Natural killer cell (primary cell): ENCODE measurements at regions of chr14 and their contacts with region 1.

Region 1: GRCh38 chr14:69818757-69819191 is 21.7 kb upstream of the SLC10A1 start:
- DNase-seq: peak; percentile 26 to 81
- ATAC-seq: peak; percentile 78 to 82 (median 80)
- H3K4me3 ChIP-seq: no peak overlapping the region
- H3K4me3 Mint-ChIP-seq: no peak overlapping the region
- H3K27ac ChIP-seq: no peak overlapping the region
- H3K27ac Mint-ChIP-seq: no peak overlapping the region
- H3K4me1 ChIP-seq: no peaks in the 10 kb centered on the region
- H3K4me1 Mint-ChIP-seq: peaks cover 0 to 5% of the 10 kb centered on the region in 2 donors
- H3K27me3 ChIP-seq: no peaks in the 10 kb centered on the region
- H3K27me3 Mint-ChIP-seq: peaks cover 0 to 2% of the 10 kb centered on the region in 2 donors
- CTCF ChIP-seq: peak; percentile 82

Region 2: GRCh38 chr14:69002069-69002468 is 816.7 kb before region 1 on chr14:
- intact Hi-C with region 1: no loop called
- DNase-seq: peak in 1 of 2 donors; percentile 46
- ATAC-seq: peak in 1 of 3 donors; percentile 54
- H3K4me3 ChIP-seq: no peak overlapping the region
- H3K4me3 Mint-ChIP-seq: no peak overlapping the region
- H3K27ac ChIP-seq: no peak overlapping the region
- H3K27ac Mint-ChIP-seq: no peak overlapping the region
- H3K4me1 ChIP-seq: no peaks in the 10 kb centered on the region
- H3K4me1 Mint-ChIP-seq: no peaks in the 10 kb centered on the region
- H3K27me3 ChIP-seq: no peaks in the 10 kb centered on the region
- H3K27me3 Mint-ChIP-seq: peaks cover 10 to 17% of the 10 kb centered on the region in 2 donors
- CTCF ChIP-seq: no peak

Region 3: GRCh38 chr14:69695322-69696203 is 123.2 kb before region 1 on chr14:
- intact Hi-C with region 1: no loop called
- DNase-seq: no peak
- ATAC-seq: no peak
- H3K4me3 ChIP-seq: no peak overlapping the region
- H3K4me3 Mint-ChIP-seq: peak overlapping the region; percentile 47
- H3K27ac ChIP-seq: peak overlapping the region; percentile 63
- H3K27ac Mint-ChIP-seq: peak overlapping the region; percentile 80 to 81
- H3K4me1 ChIP-seq: peaks cover 52% of the 10 kb centered on the region
- H3K4me1 Mint-ChIP-seq: peaks cover 86 to 92% of the 10 kb centered on the region in 2 donors
- H3K27me3 ChIP-seq: no peaks in the 10 kb centered on the region
- H3K27me3 Mint-ChIP-seq: no peaks in the 10 kb centered on the region
- CTCF ChIP-seq: no peak

Region 4: GRCh38 chr14:70013269-70013873 is 194.6 kb after region 1 on chr14:
- intact Hi-C with region 1: loop called (anchors 5 kb)
- DNase-seq: peak in 1 of 2 donors; percentile 24
- ATAC-seq: peak in 1 of 3 donors; percentile 50
- H3K4me3 ChIP-seq: no peak overlapping the region
- H3K4me3 Mint-ChIP-seq: no peak overlapping the region
- H3K27ac ChIP-seq: no peak overlapping the region
- H3K27ac Mint-ChIP-seq: no peak overlapping the region
- H3K4me1 ChIP-seq: peaks cover 2% of the 10 kb centered on the region
- H3K4me1 Mint-ChIP-seq: peaks cover 9 to 11% of the 10 kb centered on the region in 2 donors
- H3K27me3 ChIP-seq: no peaks in the 10 kb centered on the region
- H3K27me3 Mint-ChIP-seq: peaks cover 0 to 16% of the 10 kb centered on the region in 2 donors
- CTCF ChIP-seq: peak; percentile 22

Region 5: GRCh38 chr14:70027785-70028428 is 209.1 kb after region 1 on chr14:
- intact Hi-C with region 1: loop called (anchors 1 kb)
- DNase-seq: peak; percentile 63 to 64
- ATAC-seq: peak; percentile 55 to 89 (median 63)
- H3K4me3 ChIP-seq: no peak overlapping the region
- H3K4me3 Mint-ChIP-seq: no peak overlapping the region
- H3K27ac ChIP-seq: no peak overlapping the region
- H3K27ac Mint-ChIP-seq: no peak overlapping the region
- H3K4me1 ChIP-seq: no peaks in the 10 kb centered on the region
- H3K4me1 Mint-ChIP-seq: no peaks in the 10 kb centered on the region
- H3K27me3 ChIP-seq: no peaks in the 10 kb centered on the region
- H3K27me3 Mint-ChIP-seq: peaks cover 0 to 5% of the 10 kb centered on the region in 2 donors
- CTCF ChIP-seq: peak; percentile 71

Region 6: DNA sequence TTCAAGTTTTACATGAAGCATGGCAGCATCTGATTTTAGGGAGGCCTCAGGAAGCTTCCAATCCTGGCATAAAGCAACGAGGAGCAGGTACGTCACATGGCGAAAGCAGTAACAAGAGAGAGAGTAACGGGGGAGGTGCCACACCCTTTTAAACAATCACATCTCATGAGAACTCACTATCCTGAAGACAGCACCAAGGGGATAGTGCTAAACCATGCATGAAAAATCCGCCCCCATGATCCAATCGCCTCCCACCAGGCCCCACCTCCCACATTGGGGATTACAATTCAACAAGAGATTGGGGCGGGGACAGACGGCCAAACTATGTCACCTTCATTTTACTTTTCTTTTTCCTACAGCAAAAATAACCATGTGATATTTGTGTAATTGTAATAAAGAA is 997.8 kb after region 1 on chr14:
- intact Hi-C with region 1: loop called (anchors 5 kb)
- DNase-seq: no peak
- ATAC-seq: no peak
- H3K4me3 ChIP-seq: no peak overlapping the region
- H3K4me3 Mint-ChIP-seq: no peak overlapping the region
- H3K27ac ChIP-seq: no peak overlapping the region
- H3K27ac Mint-ChIP-seq: no peak overlapping the region
- H3K4me1 ChIP-seq: peaks cover 10% of the 10 kb centered on the region
- H3K4me1 Mint-ChIP-seq: peaks cover 6 to 8% of the 10 kb centered on the region in 2 donors
- H3K27me3 ChIP-seq: peaks cover 14% of the 10 kb centered on the region
- H3K27me3 Mint-ChIP-seq: peaks cover 6 to 29% of the 10 kb centered on the region in 2 donors
- CTCF ChIP-seq: no peak